ENCODE measurements at regions of chr11 and their contacts with region 1.

Region 1: GRCh38 chr11:113896156-113896879 is 8.3 kb upstream of the HTR3B start:
- DNase-seq: no peak
- ATAC-seq: peak; percentile 84
- H3K4me3 ChIP-seq: no peak overlapping the region
- H3K27ac ChIP-seq: no peak overlapping the region
- H3K4me1 ChIP-seq: peaks cover 33% of the 10 kb centered on the region
- H3K27me3 ChIP-seq: no peaks in the 10 kb centered on the region
- CTCF ChIP-seq: peak; percentile 79
- EP300 ChIP-seq: no peak
- POLR2A ChIP-seq: no peak
- RAD21 ChIP-seq: 0 out of 2 replicates have a peak, but pooled peaks have one; percentile 15

Region 2: DNA sequence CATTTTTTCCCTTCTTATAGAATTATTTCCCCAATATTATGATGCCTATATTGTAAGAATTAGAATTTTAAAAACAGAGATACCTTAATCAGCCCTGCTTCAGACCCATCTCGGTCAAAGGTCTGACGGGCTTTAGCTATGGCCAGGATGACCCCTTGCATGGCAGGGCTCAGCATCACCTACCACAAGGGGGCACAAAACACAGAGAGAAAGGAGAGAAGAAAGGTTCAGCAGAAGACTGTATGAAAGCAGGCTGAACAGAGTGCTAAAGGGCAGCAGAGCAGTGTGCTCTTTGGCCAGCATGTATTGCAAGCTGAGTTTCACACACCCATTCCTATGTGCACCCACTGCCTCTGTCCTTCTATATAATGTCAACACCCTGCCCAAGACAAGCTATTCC is 89.9 kb before region 1 on chr11:
- CTCF ChIA-PET with region 1: no interaction called
- POLR2A ChIA-PET with region 1: no interaction called
- in situ Hi-C with region 1: no loop called
- intact Hi-C with region 1: loop called (anchors 1 kb)
- DNase-seq: peak; percentile 64
- ATAC-seq: peak; percentile 100
- H3K4me3 ChIP-seq: no peak overlapping the region
- H3K27ac ChIP-seq: no peak overlapping the region
- H3K4me1 ChIP-seq: peaks cover 9% of the 10 kb centered on the region; the same call in 1 of the 2 replicates
- H3K27me3 ChIP-seq: no peaks in the 10 kb centered on the region
- CTCF ChIP-seq: peak; percentile 71
- EP300 ChIP-seq: no peak
- POLR2A ChIP-seq: no peak
- RAD21 ChIP-seq: peak; percentile 14; the same call in 1 of the 2 replicates

Region 3: GRCh38 chr11:113875234-113876073 is 20.9 kb before region 1 on chr11 and contains the start of gene USP28:
- CTCF ChIA-PET with region 1: no interaction called
- POLR2A ChIA-PET with region 1: interaction called, 16 read pairs
- in situ Hi-C with region 1: no loop called
- intact Hi-C with region 1: no loop called
- DNase-seq: peak; percentile 89
- ATAC-seq: peak; percentile 90
- H3K4me3 ChIP-seq: peak within 1 kb of the TSS; percentile 72 to 89 (median 85)
- H3K27ac ChIP-seq: peak within 1 kb of the TSS; percentile 87
- H3K4me1 ChIP-seq: peaks cover 68% of the 10 kb centered on the region
- H3K27me3 ChIP-seq: no peaks in the 10 kb centered on the region; a peak in 1 of 5 replicates
- CTCF ChIP-seq: no peak; the same call in 1 of the 2 replicates
- EP300 ChIP-seq: peak in 1 of 2 experiments; percentile 12; a peak in 1 of 4 replicates
- POLR2A ChIP-seq: peak; percentile 94 to 96
- RAD21 ChIP-seq: peak; percentile 7; the same call in 1 of the 2 replicates
- total RNA-seq, gene USP28: 34.3 and 52.0 TPM in 2 replicates

Region 4: DNA sequence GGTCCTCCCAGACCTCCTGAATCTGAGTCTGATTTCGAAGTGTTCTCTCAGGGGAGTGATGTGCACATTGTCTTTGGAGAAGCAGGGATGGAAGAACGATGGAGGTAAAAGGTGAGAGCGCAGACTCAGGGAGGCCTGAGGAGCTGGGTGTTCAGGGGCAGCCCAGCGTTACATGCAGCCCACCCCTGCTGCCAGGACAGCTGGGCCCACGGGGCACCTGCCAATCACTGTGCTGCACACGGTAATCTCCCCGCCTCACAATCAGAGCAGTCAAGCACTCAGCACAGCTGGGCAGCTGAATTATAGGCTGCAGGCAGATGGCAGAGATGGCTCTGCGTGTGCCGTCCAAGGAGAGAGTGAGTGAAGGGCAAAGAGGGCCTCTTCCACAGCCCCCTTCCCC is 60.7 kb after region 1 on chr11:
- CTCF ChIA-PET with region 1: no interaction called
- POLR2A ChIA-PET with region 1: no interaction called
- in situ Hi-C with region 1: no loop called
- intact Hi-C with region 1: no loop called
- DNase-seq: no peak
- ATAC-seq: no peak
- H3K4me3 ChIP-seq: no peak overlapping the region
- H3K27ac ChIP-seq: no peak overlapping the region
- H3K4me1 ChIP-seq: no peaks in the 10 kb centered on the region
- H3K27me3 ChIP-seq: peaks cover 0 to 25% of the 10 kb centered on the region in 2 experiments; a peak in 2 of 5 replicates
- CTCF ChIP-seq: no peak
- EP300 ChIP-seq: no peak
- POLR2A ChIP-seq: no peak
- RAD21 ChIP-seq: no peak

Region 5: GRCh38 chr11:113974741-113975470 is 78.6 kb after region 1 on chr11 and contains the start of gene HTR3A:
- CTCF ChIA-PET with region 1: no interaction called
- POLR2A ChIA-PET with region 1: no interaction called
- in situ Hi-C with region 1: no loop called
- intact Hi-C with region 1: loop called (anchors 2 kb)
- DNase-seq: peak; percentile 9
- ATAC-seq: peak; percentile 51
- H3K4me3 ChIP-seq: no peak within 1 kb of the TSS
- H3K27ac ChIP-seq: no peak within 1 kb of the TSS
- H3K4me1 ChIP-seq: no peaks in the 10 kb centered on the region
- H3K27me3 ChIP-seq: peaks cover 5 to 63% of the 10 kb centered on the region in 2 experiments; a peak in 4 of 5 replicates
- CTCF ChIP-seq: no peak
- EP300 ChIP-seq: no peak
- POLR2A ChIP-seq: no peak
- RAD21 ChIP-seq: no peak
- total RNA-seq, gene HTR3A: not detected in 2 replicates

Region 6: GRCh38 chr11:113994077-113994954 is 98.0 kb after region 1 on chr11:
- CTCF ChIA-PET with region 1: interaction called, 3 read pairs
- POLR2A ChIA-PET with region 1: no interaction called
- in situ Hi-C with region 1: no loop called
- intact Hi-C with region 1: loop called (anchors 1 kb)
- DNase-seq: no peak
- ATAC-seq: peak; percentile 63; the same call in 2 of the 3 replicates
- H3K4me3 ChIP-seq: no peak overlapping the region
- H3K27ac ChIP-seq: no peak overlapping the region
- H3K4me1 ChIP-seq: no peaks in the 10 kb centered on the region
- H3K27me3 ChIP-seq: peaks cover 0 to 2% of the 10 kb centered on the region in 2 experiments; a peak in 3 of 5 replicates
- CTCF ChIP-seq: peak; percentile 64
- EP300 ChIP-seq: no peak
- POLR2A ChIP-seq: no peak
- RAD21 ChIP-seq: peak; percentile 46; the same call in 1 of the 2 replicates

Region 7: GRCh38 chr11:114180301-114181055 is 284.2 kb after region 1 on chr11:
- CTCF ChIA-PET with region 1: no interaction called
- POLR2A ChIA-PET with region 1: no interaction called
- in situ Hi-C with region 1: no loop called
- intact Hi-C with region 1: loop called (anchors 5 kb)
- DNase-seq: peak; percentile 12
- ATAC-seq: peak; percentile 86
- H3K4me3 ChIP-seq: no peak overlapping the region
- H3K27ac ChIP-seq: no peak overlapping the region
- H3K4me1 ChIP-seq: no peaks in the 10 kb centered on the region
- H3K27me3 ChIP-seq: peaks cover 2 to 4% of the 10 kb centered on the region in 2 experiments; a peak in 2 of 5 replicates
- CTCF ChIP-seq: peak; percentile 63
- EP300 ChIP-seq: no peak
- POLR2A ChIP-seq: no peak
- RAD21 ChIP-seq: no peak

Region 8: GRCh38 chr11:114262681-114263512 is 366.6 kb after region 1 on chr11:
- CTCF ChIA-PET with region 1: interaction called, 9 read pairs
- POLR2A ChIA-PET with region 1: no interaction called
- in situ Hi-C with region 1: loop called (anchors 5 kb)
- intact Hi-C with region 1: loop called (anchors 1 kb)
- DNase-seq: peak; percentile 44
- ATAC-seq: peak; percentile 79
- H3K4me3 ChIP-seq: no peak overlapping the region
- H3K27ac ChIP-seq: no peak overlapping the region
- H3K4me1 ChIP-seq: peaks cover 8% of the 10 kb centered on the region
- H3K27me3 ChIP-seq: peaks cover 4 to 21% of the 10 kb centered on the region in 2 experiments; a peak in 3 of 5 replicates
- CTCF ChIP-seq: peak; percentile 79
- EP300 ChIP-seq: no peak
- POLR2A ChIP-seq: no peak
- RAD21 ChIP-seq: peak; percentile 65

Measured in HepG2 (cell line).